ENCODE measurements at regions of chr17 and their contacts with region 1.

Region 1: GRCh38 chr17:34562387-34562786 is 17.0 kb upstream of the TMEM132E start:
- DNase-seq: no peak
- ATAC-seq: no peak
- H3K4me3 ChIP-seq: no peak overlapping the region
- H3K4me1 ChIP-seq: no peaks in the 10 kb centered on the region
- CTCF ChIP-seq: no peak

Region 2: DNA sequence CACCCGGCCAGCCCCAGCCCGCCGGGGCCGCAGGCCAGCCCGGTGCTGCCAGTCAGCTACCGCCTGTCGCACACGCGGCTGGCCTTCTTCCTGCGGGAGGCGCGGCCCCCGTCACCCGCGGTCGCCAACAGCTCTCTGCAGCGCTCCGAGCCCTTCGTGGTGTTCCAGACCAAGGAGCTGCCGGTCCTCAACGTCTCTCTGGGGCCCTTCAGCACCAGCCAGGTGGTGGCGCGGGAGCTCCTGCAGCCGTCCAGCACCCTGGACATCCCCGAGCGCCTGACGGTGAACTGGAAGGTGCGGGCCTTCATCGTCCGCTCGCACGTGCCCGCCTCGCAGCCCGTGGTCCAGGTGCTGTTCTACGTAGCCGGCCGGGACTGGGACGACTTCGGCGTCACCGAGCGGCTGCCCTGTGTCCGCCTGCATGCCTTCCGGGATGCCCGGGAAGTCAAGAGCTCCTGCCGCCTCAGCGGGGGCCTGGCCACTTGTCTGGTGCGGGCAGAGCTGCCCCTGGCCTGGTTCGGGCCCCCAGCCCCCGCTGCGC is 63.8 kb after region 1 on chr17:
- intact Hi-C with region 1: loop called in 1 of 2 experiments (anchors 10 kb)
- DNase-seq: no peak
- ATAC-seq: no peak
- H3K4me3 ChIP-seq: no peak overlapping the region
- H3K4me1 ChIP-seq: no peaks in the 10 kb centered on the region
- CTCF ChIP-seq: no peak

Region 3: GRCh38 chr17:35129973-35130351 is 567.6 kb after region 1 on chr17:
- intact Hi-C with region 1: loop called in 1 of 2 experiments (anchors 10 kb)
- DNase-seq: no peak
- ATAC-seq: no peak
- H3K4me3 ChIP-seq: no peak overlapping the region
- H3K4me1 ChIP-seq: no peaks in the 10 kb centered on the region
- CTCF ChIP-seq: no peak